Activated naive CD4-positive, alpha-beta T cell treated with anti-CD3 and anti-CD28 coated beads, Interleukin-2, amount 10 ng/mL, durations not matched to agents 7 days and 5 days (primary cell): ENCODE measurements at regions of chr11 and their contacts with region 1.

Region 1: GRCh38 chr11:59186130-59186594 is 14.2 kb downstream of the DTX4 start:
- DNase-seq: peak; percentile 62
- H3K4me3 Mint-ChIP-seq: no peak overlapping the region
- H3K27ac Mint-ChIP-seq: no peak overlapping the region
- H3K4me1 Mint-ChIP-seq: no peaks in the 10 kb centered on the region
- H3K27me3 Mint-ChIP-seq: peaks cover 19% of the 10 kb centered on the region

Region 2: DNA sequence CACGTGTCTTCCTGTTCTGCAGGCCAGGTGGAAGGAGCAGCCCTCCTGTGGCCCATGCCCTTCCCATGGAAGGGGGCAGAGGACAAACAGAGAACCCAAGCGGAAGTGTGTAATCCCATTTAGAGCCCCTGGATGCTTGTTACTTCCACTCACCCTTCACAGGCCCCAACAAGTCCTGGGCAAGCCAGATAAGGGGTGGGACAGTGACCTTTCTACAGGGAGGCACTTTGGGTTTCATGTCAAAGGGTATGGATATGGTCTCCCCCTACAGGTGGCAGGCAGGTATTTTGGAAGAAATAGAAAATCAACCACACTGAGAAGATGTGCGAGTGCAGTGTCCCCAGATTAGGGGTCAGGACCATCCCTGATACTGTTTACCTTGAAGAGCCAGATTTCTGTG is 15.2 kb after region 1 on chr11:
- CTCF ChIA-PET with region 1: interaction called, 16 read pairs
- DNase-seq: no peak
- H3K4me3 Mint-ChIP-seq: no peak overlapping the region
- H3K27ac Mint-ChIP-seq: no peak overlapping the region
- H3K4me1 Mint-ChIP-seq: no peaks in the 10 kb centered on the region
- H3K27me3 Mint-ChIP-seq: peaks cover 22% of the 10 kb centered on the region

Region 3: DNA sequence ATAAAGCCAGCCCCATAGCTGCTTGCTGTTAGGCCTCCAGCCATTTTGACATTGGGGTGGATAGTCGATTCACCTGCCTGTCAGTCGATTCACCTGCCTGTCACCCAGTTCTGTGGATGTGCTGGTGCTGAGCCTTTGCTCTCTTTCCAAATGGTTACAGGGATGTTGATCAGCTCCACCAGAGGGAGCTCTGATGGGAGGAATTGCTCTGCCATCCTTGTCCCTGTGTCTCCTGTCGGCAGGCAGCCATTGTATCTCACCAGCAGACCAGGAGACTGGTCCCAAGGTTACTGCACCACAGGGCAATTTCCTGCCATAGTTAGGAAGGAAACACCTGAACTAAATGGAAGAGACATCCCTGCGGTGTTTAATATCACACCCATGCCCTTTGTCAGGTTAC is 20.5 kb after region 1 on chr11:
- CTCF ChIA-PET with region 1: interaction called, 16 read pairs
- DNase-seq: peak; percentile 36
- H3K4me3 Mint-ChIP-seq: no peak overlapping the region
- H3K27ac Mint-ChIP-seq: no peak overlapping the region
- H3K4me1 Mint-ChIP-seq: peaks cover 12% of the 10 kb centered on the region
- H3K27me3 Mint-ChIP-seq: peaks cover 41% of the 10 kb centered on the region